Activated CD4-positive, alpha-beta memory T cell treated with anti-CD3 and anti-CD28 coated beads for 36 hours (primary cell): ENCODE measurements at regions of chr4 and their contacts with region 1.

Region 1: GRCh38 chr4:154559494-154560418 is 3.1 kb upstream of the FGB start:
- DNase-seq: no peak
- H3K4me3 Mint-ChIP-seq: no peak overlapping the region
- H3K27ac Mint-ChIP-seq: no peak overlapping the region
- H3K4me1 Mint-ChIP-seq: peaks cover 5% of the 10 kb centered on the region
- H3K27me3 Mint-ChIP-seq: peaks cover 2% of the 10 kb centered on the region

Region 2: GRCh38 chr4:154124539-154125255 is 435.1 kb before region 1 on chr4:
- CTCF ChIA-PET with region 1: no interaction called
- POLR2A ChIA-PET with region 1: no interaction called
- intact Hi-C with region 1: no loop called
- DNase-seq: no peak
- H3K4me3 Mint-ChIP-seq: no peak overlapping the region
- H3K27ac Mint-ChIP-seq: no peak overlapping the region
- H3K4me1 Mint-ChIP-seq: no peaks in the 10 kb centered on the region
- H3K27me3 Mint-ChIP-seq: peaks cover 6% of the 10 kb centered on the region

Region 3: GRCh38 chr4:154526151-154526550 is 33.6 kb before region 1 on chr4:
- CTCF ChIA-PET with region 1: no interaction called
- POLR2A ChIA-PET with region 1: no interaction called
- intact Hi-C with region 1: no loop called
- DNase-seq: no peak
- H3K4me3 Mint-ChIP-seq: no peak overlapping the region
- H3K27ac Mint-ChIP-seq: no peak overlapping the region
- H3K4me1 Mint-ChIP-seq: no peaks in the 10 kb centered on the region
- H3K27me3 Mint-ChIP-seq: peaks cover 31% of the 10 kb centered on the region

Region 4: GRCh38 chr4:154618708-154619315 is 59.1 kb after region 1 on chr4:
- CTCF ChIA-PET with region 1: interaction called, 222 read pairs
- POLR2A ChIA-PET with region 1: no interaction called
- intact Hi-C with region 1: loop called (anchors 1 kb)
- DNase-seq: peak; percentile 68
- H3K4me3 Mint-ChIP-seq: no peak overlapping the region
- H3K27ac Mint-ChIP-seq: no peak overlapping the region
- H3K4me1 Mint-ChIP-seq: peaks cover 8% of the 10 kb centered on the region
- H3K27me3 Mint-ChIP-seq: no peaks in the 10 kb centered on the region

Region 5: GRCh38 chr4:154677923-154678322 is 118.2 kb after region 1 on chr4:
- CTCF ChIA-PET with region 1: no interaction called
- POLR2A ChIA-PET with region 1: no interaction called
- intact Hi-C with region 1: no loop called
- DNase-seq: no peak
- H3K4me3 Mint-ChIP-seq: no peak overlapping the region
- H3K27ac Mint-ChIP-seq: no peak overlapping the region
- H3K4me1 Mint-ChIP-seq: no peaks in the 10 kb centered on the region
- H3K27me3 Mint-ChIP-seq: peaks cover 5% of the 10 kb centered on the region